ENCODE measurements at regions of chr7 and their contacts with region 1.

Region 1: GRCh38 chr7:155796381-155797261 is 15.6 kb downstream of the SHH start:
- DNase-seq: peak in 1 of 2 experiments; percentile 74
- H3K4me3 ChIP-seq: no peak overlapping the region
- H3K27ac ChIP-seq: no peak overlapping the region
- H3K4me1 ChIP-seq: no peaks in the 10 kb centered on the region
- H3K27me3 ChIP-seq: peaks cover 33% of the 10 kb centered on the region; the same call in 1 of the 2 replicates
- CTCF ChIP-seq: peak; percentile 83

Region 2: GRCh38 chr7:155205368-155206317 is 591.0 kb before region 1 on chr7:
- CTCF ChIA-PET with region 1: no interaction called
- POLR2A ChIA-PET with region 1: no interaction called
- intact Hi-C with region 1: no loop called
- DNase-seq: peak; percentile 91 to 99
- H3K4me3 ChIP-seq: peak overlapping the region; percentile 53
- H3K27ac ChIP-seq: peak overlapping the region; percentile 90
- H3K4me1 ChIP-seq: peaks cover 44% of the 10 kb centered on the region
- H3K27me3 ChIP-seq: no peaks in the 10 kb centered on the region
- CTCF ChIP-seq: no peak

Region 3: GRCh38 chr7:156816943-156817572 is 1020.4 kb after region 1 on chr7:
- CTCF ChIA-PET with region 1: interaction called, 6 read pairs
- POLR2A ChIA-PET with region 1: no interaction called
- intact Hi-C with region 1: loop called (anchors 2 kb)
- DNase-seq: no peak
- H3K4me3 ChIP-seq: no peak overlapping the region
- H3K27ac ChIP-seq: no peak overlapping the region
- H3K4me1 ChIP-seq: no peaks in the 10 kb centered on the region
- H3K27me3 ChIP-seq: no peaks in the 10 kb centered on the region
- CTCF ChIP-seq: peak; percentile 84

Region 4: DNA sequence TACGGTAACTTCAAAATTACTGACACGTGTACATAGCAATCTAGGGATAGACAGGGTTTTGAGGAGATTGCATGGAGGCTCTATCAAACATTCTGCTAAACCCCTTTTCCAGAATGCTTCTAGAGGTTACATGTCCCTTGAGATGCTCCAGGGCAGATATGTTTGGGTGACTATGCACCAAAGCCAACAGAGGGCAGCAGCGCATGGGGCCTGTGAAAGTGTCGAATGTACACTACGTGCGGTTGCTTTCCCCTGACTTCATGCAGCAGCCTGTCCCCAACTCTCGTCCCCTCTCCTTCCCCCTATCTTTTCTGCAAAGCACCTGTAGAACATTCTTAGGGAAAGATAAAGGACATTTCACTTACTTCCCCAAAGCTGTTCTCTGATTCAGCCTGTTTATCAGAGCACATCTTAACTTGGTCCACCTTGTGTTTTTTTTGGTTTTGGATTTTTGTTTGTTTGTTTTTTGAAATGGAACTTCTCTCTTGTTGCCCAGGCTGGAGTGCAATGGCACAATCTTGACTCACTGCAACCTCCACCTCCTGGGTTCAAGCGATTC is 1432.3 kb after region 1 on chr7:
- CTCF ChIA-PET with region 1: no interaction called
- POLR2A ChIA-PET with region 1: no interaction called
- intact Hi-C with region 1: loop called (anchors 5 kb)
- DNase-seq: peak in 1 of 2 experiments; percentile 37
- H3K4me3 ChIP-seq: no peak overlapping the region
- H3K27ac ChIP-seq: no peak overlapping the region
- H3K4me1 ChIP-seq: no peaks in the 10 kb centered on the region
- H3K27me3 ChIP-seq: no peaks in the 10 kb centered on the region
- CTCF ChIP-seq: peak; percentile 70

Measured in PC-9 (cell line).